Posterior vena cava (tissue), 2 donors: ENCODE measurements at regions of chr15 and their contacts with region 1.

Region 1: DNA sequence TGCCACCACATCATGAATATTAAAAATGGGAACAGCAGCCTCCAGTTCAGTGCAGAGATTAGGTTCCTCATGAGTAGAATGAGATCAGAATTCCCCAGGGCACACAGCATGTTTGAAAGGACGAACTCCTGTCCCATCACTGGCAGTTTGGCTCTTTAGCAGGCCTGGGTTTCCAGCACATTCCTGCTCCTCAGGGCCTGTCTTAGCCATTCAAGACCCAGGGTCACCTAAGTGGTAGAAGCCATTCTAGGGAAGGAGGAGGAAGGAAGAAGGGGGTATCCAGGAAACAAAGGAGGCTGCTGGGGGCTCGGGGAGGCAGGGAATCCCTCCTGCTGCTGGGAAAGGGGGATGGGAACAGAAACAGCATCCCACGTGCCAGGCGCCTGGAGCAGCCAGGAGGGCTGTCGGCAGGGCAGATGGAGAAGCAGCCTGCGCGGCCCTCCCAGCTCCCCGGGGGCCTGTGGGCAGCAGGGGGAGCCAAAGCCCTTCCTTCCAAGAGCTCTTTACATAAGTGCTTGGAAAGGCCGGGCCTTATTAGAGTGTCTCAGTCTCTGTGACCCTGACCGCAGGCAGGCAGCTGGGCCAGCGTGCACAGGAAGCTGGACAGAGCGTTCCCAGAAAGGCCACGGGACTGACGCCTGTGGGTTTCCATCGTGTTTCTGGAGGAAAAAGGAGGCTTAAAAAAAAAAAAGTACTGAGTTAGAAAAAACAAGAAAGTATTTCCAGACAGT is 24.7 kb downstream of the LOXL1 start:
- DNase-seq: peak; percentile 98

Region 2: GRCh38 chr15:72994534-72995177 is 956.3 kb before region 1 on chr15:
- intact Hi-C with region 1: no loop called
- DNase-seq: no peak

Region 3: DNA sequence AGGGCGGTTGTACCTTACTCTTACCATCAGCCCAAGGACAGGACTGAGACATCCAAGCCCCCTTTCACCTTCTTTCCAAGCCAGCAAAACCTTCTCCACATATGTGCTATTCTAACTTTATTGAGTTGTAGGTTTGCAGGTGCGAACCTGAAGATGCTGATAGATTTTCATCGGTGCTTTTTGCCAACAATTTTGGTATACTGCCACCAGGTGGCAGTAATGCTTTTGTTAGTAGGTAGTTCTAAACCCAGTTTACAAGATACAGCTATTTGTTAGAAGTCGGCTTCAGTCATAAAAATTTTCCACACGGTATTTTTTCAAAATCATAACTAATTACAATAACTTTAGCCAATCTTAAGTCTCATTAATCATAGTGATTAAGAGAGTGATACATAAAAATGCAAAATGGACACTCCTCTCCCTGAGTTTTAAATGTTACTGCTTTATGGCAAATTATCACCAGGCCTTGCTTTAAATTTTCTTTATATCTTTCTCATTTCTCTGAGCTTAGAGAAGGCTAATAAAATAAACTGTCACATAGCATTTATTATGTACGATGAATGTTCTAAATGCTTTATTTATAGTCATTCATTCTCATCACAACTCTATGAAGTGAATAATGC is 77.0 kb before region 1 on chr15:
- intact Hi-C with region 1: loop called in 1 of 2 experiments (anchors 10 kb)
- DNase-seq: no peak

Region 4: DNA sequence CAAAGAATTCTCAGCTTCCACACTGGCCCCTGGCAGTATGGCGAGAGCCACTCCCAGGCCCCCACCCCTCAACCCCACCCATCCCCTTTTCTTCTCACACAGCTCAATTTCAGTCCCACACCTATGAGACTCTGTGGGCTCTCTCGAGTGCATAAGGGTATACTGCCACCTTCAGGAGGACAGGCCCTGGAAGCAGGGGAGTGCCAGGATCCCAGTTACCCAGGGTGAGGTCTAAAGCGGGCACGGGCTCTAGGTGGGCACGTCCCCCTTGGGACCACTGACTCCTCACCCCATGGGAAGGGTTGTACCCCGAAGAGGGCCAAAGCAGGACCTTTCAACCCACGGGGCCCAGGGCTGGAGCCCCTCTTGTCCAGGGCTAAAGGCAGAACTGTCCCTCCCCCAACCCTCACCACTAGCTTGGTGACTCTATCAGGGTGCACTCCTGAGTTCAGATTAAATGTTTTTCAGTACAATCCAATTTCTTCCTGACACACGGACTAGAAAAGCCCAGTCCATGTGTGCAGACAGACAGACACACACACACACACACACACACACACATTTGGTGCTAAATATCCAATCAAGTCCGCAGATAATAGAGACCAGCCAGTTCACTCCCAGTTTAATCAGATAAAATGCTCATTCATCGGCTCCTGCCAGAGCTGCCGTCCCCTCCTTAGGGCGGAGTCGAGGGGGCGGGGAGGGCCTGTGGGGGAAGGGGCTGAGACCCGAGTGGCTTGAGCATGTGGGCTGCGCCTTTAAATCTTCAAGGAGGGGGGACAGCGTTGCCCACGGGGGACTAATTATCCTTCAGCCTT is 357.0 kb after region 1 on chr15:
- intact Hi-C with region 1: no loop called
- DNase-seq: no peak